ENCODE measurements at regions of chr3 and their contacts with region 1.

Region 1: DNA sequence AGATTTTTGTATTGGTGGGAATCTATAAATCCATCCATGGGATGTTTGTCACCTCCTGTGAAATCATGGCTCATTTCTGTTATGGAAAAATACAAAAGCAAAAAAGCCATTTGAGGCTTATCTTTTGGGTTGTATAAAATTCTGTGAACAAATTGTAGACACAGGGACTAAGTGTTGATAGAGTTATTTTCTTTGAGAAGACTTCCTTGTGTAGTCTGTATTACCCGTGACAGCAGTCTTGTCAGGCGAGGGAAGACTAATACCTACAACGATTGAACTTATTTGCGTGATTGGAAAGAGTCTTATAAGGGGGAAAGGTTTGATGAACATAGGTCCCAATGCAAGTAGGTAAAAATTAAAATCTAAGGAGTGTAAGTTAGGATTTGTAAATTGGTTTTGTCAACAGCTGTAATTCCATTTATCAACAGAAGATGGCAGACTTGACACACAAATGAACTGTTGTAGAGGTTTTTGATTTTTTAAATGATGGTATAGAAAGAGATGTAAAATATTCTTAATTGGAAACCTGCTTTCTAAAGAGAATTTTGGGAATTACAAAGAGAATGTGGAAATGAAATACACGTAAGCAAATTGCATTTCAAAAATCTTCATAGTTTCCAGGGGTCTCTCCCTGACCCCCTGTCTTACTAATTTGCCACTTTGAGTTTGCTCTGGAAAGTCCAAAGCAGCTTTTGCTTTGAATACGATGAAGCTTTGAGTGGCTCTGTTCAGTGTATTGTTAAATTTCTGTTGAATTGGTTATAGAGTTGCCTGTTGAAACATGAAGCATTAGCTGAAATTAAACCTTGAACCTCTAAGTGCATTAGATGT is 33.2 kb downstream of the SLC25A26 start:
- DNase-seq: no peak
- ATAC-seq: no peak

Region 2: GRCh38 chr3:66322436-66322835 is 68.4 kb after region 1 on chr3:
- intact Hi-C with region 1: no loop called
- DNase-seq: no peak
- ATAC-seq: no peak

Region 3: DNA sequence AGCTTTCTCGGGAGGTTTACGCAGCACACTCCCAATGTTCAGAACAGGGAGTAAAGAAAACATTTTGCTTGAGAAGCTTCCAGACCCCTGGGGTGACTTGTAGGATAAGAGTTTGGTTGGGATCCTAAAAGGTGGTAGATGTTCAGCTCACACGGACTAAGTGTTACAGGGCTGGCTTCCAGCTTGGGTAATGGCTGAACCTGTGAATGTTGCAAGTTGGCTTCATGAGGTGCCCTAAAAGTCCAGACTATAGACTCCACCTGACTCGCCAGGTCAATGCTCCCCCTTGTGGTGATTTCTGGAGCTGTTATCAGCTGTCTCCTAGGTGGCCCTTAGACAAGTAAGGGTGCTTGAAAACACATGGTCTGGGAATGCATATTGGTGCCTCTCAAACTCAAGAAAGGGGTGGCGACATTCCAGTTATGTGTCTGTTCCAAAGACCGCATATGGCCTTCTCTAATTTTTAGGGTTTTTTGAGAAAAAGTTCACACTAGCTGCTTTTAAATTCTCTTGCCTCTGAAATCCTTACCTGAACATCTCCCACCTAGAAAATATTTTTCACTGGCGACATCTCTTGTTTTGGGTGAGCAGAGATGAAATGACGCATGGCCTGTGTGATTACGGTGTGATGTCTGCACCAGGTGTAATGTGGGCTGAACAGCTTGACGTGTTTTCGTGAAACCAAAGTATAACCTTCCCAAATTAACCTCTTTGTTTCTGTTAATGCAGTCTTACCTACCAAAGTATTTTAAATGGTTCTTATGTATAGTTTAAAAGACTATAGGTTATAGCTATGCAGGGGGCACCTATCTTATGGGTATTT is 568.4 kb after region 1 on chr3:
- intact Hi-C with region 1: loop called (anchors 5 to 10 kb)
- DNase-seq: peak; percentile 34
- ATAC-seq: peak; percentile 66 to 81